HCT116 (cell line): ENCODE measurements at regions of chr11 and their contacts with region 1.

Region 1: DNA sequence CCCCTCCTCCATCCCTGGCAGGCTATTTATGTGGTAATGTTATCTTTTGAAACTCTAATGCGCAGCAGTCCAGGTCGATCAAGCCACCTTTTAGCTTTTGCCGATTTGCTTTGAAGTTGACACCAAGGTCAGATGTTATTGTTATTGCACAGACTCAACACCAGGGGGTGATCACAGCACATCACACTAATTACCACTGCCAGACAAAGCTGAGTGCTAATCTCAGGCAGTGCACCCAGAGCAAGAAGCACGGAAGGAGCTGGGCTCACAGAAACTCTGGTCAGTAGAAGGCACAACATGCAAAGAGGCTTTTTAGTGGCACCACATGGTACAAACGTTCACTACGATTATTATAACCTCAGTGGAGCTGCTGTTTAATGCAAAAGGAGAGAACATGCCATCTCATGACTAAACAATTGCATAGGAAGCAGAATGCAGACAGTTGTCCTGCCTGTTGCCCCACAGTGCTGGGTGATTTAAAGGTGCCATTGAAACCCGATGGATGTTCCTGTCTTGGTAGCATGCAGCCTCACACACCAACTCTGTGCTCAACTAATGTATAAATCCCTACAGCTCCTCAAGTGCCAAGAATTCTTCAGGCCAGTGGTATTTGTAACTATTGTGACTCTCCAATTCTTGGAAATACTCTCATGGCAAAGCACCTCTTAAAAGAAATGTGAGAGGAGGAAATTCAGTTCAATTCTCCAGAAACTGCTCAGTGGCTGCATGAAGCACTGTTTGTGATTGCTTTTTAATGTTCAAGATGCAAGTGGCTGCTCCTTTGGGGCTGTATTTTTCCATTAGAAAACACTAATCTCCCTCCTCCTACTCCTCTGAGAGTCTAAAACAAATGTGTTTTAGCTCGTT is 353.9 kb upstream of the DDI1 start:
- DNase-seq: peak; percentile 61
- ATAC-seq: peak; percentile 93
- H3K4me3 ChIP-seq: no peak overlapping the region
- H3K27ac ChIP-seq: no peak overlapping the region
- H3K4me1 ChIP-seq: no peaks in the 10 kb centered on the region
- H3K27me3 ChIP-seq: no peaks in the 10 kb centered on the region
- CTCF ChIP-seq: peak; percentile 49 to 88 (median 79); a peak in 5 of 6 replicates
- POLR2A ChIP-seq: no peak
- RAD21 ChIP-seq: peak; percentile 86

Region 2: DNA sequence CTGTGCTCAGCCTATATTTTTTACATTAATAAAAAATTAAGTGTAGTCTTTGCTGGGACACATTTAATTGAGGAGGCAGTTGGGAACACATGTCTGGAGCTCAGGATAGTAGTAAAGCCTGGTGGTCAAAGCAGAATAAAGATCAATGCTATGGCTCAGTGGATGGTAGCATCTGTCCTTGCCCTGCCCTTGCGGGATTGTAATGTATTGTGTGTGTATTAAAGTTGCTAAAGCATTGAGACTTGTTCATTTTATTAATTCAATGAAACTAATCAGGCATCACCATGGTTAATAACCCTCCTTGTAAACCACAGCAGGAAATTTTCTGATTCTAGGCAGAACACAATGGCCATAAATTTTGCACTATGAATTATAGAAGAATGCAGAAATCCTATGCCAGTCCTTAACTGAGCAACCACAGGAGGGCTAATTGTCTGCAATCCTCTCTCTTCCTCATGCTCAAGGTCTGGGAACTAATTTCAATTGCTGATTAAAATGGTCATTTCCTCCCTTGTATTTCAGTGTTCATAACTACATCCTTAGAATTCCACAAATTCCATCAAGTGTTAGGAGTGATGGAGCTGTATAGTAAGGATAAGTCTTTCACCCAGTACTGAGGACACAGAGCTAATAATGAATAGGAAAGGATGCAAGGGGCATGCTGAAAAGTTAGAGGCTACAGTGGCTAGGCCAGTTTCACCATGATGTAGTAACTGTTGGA is 49.3 kb before region 1 on chr11:
- CTCF ChIA-PET with region 1: no interaction called
- POLR2A ChIA-PET with region 1: no interaction called
- RAD21 ChIA-PET with region 1: no interaction called
- intact Hi-C with region 1: no loop called
- DNase-seq: no peak
- ATAC-seq: no peak
- H3K4me3 ChIP-seq: no peak overlapping the region
- H3K27ac ChIP-seq: no peak overlapping the region
- H3K4me1 ChIP-seq: no peaks in the 10 kb centered on the region
- H3K27me3 ChIP-seq: no peaks in the 10 kb centered on the region
- CTCF ChIP-seq: no peak
- POLR2A ChIP-seq: no peak
- RAD21 ChIP-seq: no peak

Region 3: GRCh38 chr11:104151404-104152204 is 469.1 kb after region 1 on chr11:
- CTCF ChIA-PET with region 1: interaction called, 4 read pairs
- POLR2A ChIA-PET with region 1: no interaction called
- RAD21 ChIA-PET with region 1: no interaction called
- intact Hi-C with region 1: loop called (anchors 1 kb)
- DNase-seq: peak; percentile 16
- ATAC-seq: no peak
- H3K4me3 ChIP-seq: no peak overlapping the region
- H3K27ac ChIP-seq: no peak overlapping the region
- H3K4me1 ChIP-seq: no peaks in the 10 kb centered on the region
- H3K27me3 ChIP-seq: no peaks in the 10 kb centered on the region
- CTCF ChIP-seq: peak; percentile 20 to 59 (median 30); a peak in 4 of 6 replicates
- POLR2A ChIP-seq: no peak
- RAD21 ChIP-seq: peak; percentile 47

Region 4: GRCh38 chr11:104254347-104254746 is 571.8 kb after region 1 on chr11:
- CTCF ChIA-PET with region 1: interaction called, 9 read pairs
- POLR2A ChIA-PET with region 1: no interaction called
- RAD21 ChIA-PET with region 1: no interaction called
- intact Hi-C with region 1: loop called (anchors 10 kb)
- DNase-seq: peak; percentile 46
- ATAC-seq: peak; percentile 100
- H3K4me3 ChIP-seq: no peak overlapping the region
- H3K27ac ChIP-seq: no peak overlapping the region
- H3K4me1 ChIP-seq: no peaks in the 10 kb centered on the region
- H3K27me3 ChIP-seq: no peaks in the 10 kb centered on the region
- CTCF ChIP-seq: peak; percentile 56 to 93 (median 87); a peak in 5 of 6 replicates
- POLR2A ChIP-seq: no peak
- RAD21 ChIP-seq: peak; percentile 80

Region 5: DNA sequence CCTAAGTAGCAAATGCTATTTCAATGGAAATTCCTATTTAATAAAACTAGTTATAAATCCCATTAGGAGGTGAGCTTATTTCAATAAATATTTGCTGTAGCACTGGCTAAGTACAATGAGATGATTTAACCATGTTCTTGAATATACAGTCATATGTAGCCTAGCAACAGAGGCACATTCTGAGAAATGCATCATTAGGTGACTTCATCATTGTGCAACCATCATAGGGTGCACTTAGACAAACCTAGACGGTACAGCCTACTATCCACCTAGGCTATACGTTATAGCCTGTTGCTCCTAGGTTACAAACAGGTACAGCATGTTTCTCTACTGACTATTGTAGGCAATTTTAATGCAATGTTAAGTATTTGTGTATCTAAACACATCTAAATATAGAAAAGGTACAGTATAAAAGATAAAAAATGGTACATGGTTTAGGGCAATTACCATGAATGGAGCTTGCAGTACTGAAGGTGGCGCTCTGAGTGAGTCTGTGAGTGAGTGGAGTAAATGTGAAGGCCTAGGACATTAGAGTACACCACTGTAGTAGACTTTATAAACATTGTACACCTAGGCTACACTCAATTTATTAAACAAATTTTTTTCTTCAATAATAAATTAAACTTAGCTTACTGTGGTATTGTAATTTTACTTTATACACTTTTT is 865.6 kb after region 1 on chr11:
- CTCF ChIA-PET with region 1: no interaction called
- POLR2A ChIA-PET with region 1: no interaction called
- RAD21 ChIA-PET with region 1: no interaction called
- intact Hi-C with region 1: no loop called
- DNase-seq: no peak
- ATAC-seq: no peak
- H3K4me3 ChIP-seq: no peak overlapping the region
- H3K27ac ChIP-seq: no peak overlapping the region
- H3K4me1 ChIP-seq: no peaks in the 10 kb centered on the region
- H3K27me3 ChIP-seq: no peaks in the 10 kb centered on the region
- CTCF ChIP-seq: no peak
- POLR2A ChIP-seq: no peak
- RAD21 ChIP-seq: no peak